Dendritic cell treated with granulocyte-macrophage colony-stimulating factor and Interleukin-4, amounts not matched to agents 40 ng/mL and 50 ng/mL, for 4 days (primary cell): ENCODE measurements at regions of chr11 and their contacts with region 1.

Region 1: DNA sequence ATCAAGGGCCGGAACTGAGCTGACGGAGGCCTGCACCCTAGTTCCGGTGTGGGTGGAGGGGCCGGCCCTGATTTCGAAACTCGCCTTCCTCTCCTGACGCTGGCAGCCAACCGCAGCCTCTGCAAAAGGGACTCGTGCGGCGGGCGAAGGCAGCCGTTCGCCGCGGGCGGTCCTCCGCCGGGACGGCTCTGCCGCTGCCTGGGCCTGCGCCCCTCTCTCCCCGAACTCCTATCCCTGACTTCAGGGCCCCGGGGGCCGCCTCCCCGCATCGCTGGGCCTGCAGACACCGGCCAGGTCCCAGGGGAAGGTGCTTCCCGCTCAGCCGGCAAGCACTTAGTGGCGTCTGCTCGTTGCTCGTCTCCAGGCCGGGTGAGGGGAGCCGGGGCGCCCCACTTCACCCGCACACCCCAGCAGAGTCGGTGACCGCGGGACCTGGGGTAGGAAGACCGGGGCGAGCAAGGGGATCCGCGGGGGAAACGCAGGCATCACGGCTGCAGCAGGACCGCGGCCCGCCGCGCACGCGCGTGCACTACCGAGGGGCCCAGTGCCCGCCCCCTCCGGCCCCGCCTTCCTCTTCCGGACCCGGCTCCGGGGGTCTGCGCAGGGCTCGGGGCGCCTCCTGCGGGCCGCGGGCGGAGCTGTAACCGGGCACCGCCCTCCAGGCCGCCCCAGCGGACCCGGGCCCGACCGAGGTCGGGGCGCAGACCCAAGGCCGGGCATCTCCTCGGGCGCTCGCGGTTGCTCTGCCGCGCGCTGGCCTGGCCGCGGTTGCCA is 464 bp upstream of the ANKRD13D start:
- H3K4me3 Mint-ChIP-seq: peak overlapping the region; percentile 79
- H3K27ac Mint-ChIP-seq: peak overlapping the region; percentile 98
- H3K4me1 Mint-ChIP-seq: peaks cover 86% of the 10 kb centered on the region
- H3K27me3 Mint-ChIP-seq: no peaks in the 10 kb centered on the region

Region 2: DNA sequence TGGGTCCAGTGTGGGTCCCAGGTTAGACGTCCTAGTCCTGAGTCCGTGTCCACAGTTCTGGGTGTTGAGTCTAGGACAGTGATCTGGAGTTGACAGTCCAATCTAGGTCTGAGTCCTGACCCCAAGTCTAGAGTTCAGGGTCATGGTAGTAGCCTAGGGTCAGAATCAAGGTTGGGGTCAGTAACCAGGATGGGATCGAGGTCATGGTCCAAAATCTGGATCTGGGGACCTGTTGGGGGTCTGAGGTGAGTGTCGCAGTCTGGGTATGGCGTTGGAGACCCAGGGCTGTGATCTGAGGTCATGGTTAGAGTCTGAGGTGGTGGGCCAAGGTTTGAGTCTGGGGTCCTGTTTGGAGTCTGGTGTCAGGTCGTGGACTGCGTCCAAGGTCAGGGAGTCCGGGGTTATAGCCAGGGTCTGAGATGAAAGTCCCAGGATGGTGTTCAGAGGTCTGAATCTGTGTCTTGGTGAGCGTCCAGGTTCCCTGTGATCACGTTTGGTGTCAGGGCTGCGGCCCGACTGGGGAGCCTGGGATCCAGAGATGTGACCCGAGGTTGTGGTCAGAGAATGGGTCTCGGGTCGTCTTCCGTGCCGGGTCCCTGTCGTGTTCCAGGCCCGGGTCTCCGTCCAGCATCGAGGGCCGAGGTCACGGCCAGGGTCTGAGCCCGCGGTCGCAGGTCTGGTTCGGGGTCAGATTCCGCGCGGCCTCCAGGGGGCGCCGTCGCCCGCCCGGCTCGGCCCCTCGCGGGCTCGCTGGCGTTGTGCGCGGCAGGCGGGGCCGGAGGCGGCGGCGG is 22.8 kb before region 1 on chr11:
- intact Hi-C with region 1: loop called (anchors 2 kb)
- H3K4me3 Mint-ChIP-seq: peak overlapping the region; percentile 64
- H3K27ac Mint-ChIP-seq: peak overlapping the region; percentile 98
- H3K4me1 Mint-ChIP-seq: peaks cover 88% of the 10 kb centered on the region
- H3K27me3 Mint-ChIP-seq: peaks cover 6% of the 10 kb centered on the region

Region 3: GRCh38 chr11:67277231-67277961 is 11.2 kb before region 1 on chr11:
- intact Hi-C with region 1: loop called (anchors 1 kb)
- H3K4me3 Mint-ChIP-seq: peak overlapping the region; percentile 72
- H3K27ac Mint-ChIP-seq: peak overlapping the region; percentile 98
- H3K4me1 Mint-ChIP-seq: peaks cover 100% of the 10 kb centered on the region
- H3K27me3 Mint-ChIP-seq: no peaks in the 10 kb centered on the region

Region 4: DNA sequence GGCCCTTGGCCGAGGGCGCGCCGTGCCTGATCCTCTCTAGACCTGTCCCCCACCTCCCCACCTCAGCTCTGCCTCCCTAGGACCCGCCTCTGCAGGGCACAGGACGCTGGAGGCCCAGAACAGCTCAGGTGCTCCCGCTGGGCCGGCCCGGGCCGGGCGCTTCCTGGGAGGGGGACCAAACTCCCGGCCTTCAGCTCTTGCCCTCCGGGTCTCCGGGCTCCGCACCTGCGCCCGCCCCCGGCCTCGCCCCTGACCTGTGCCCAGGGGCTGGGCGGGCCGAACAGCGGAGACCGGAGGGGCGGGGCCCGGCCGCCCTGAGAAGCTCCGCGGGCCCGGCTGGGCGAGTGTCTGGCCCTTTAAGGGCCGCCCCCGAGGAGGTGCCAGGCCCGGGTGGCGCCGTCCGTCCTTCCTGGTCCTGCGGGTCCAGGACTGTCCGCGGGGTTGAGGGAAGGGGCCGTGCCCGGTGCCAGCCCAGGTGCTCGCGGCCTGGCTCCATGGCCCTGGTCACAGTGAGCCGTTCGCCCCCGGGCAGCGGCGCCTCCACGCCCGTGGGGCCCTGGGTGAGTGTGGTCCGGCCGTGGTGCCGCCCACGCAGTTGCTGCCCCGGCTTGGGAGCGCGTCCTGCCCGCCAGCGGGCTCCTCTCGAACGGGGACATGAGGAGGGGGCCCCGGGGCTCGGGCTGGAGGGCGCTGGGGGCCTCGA is 14.6 kb after region 1 on chr11 and contains the start of gene SSH3:
- intact Hi-C with region 1: loop called (anchors 1 kb)
- H3K4me3 Mint-ChIP-seq: peak within 1 kb of the TSS; percentile 78
- H3K27ac Mint-ChIP-seq: peak within 1 kb of the TSS; percentile 83
- H3K4me1 Mint-ChIP-seq: peaks cover 66% of the 10 kb centered on the region
- H3K27me3 Mint-ChIP-seq: no peaks in the 10 kb centered on the region

Region 5: DNA sequence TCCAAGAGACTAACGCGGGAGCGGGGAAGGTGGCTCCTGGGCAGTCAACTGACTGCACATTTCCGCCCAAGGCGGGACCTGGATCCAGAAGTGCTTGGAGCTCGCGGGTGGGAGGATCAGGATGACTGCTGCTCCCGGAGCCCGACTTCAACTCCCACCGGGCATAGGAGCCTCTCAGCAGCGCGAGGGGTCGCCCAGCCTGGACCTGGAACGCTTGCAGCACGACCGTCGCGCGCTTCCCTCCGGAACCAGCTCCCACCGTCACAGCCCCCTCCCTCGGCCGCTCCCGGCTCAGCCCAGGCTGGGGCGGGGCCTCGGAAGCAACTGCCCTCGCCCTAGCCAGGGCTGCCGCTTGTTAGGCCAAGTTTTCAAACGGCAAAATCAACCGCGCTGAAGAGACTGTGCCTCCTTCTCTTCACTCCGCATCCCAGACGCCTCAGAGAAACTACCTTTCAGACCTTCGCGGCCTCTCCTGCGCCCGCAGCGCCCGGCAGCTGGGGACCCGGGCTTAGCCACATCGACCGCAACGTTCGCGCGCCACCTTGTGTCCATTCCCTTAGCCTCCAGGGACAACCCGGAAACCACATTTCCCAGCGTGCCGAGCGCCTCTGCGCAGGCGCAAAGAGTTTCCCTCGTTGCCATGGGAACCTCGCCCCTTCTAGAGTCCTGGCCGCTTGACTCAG is 28.7 kb after region 1 on chr11:
- intact Hi-C with region 1: loop called (anchors 1 kb)
- H3K4me3 Mint-ChIP-seq: peak overlapping the region; percentile 92
- H3K27ac Mint-ChIP-seq: peak overlapping the region; percentile 96
- H3K4me1 Mint-ChIP-seq: peaks cover 27% of the 10 kb centered on the region
- H3K27me3 Mint-ChIP-seq: peaks cover 10% of the 10 kb centered on the region